ENCODE measurements at regions of chr9 and their contacts with region 1.

Region 1: GRCh38 chr9:124291801-124292396 is 34.1 kb downstream of the NEK6 start:
- DNase-seq: no peak
- H3K4me3 ChIP-seq: no peak overlapping the region
- CTCF ChIP-seq: peak; percentile 24

Region 2: DNA sequence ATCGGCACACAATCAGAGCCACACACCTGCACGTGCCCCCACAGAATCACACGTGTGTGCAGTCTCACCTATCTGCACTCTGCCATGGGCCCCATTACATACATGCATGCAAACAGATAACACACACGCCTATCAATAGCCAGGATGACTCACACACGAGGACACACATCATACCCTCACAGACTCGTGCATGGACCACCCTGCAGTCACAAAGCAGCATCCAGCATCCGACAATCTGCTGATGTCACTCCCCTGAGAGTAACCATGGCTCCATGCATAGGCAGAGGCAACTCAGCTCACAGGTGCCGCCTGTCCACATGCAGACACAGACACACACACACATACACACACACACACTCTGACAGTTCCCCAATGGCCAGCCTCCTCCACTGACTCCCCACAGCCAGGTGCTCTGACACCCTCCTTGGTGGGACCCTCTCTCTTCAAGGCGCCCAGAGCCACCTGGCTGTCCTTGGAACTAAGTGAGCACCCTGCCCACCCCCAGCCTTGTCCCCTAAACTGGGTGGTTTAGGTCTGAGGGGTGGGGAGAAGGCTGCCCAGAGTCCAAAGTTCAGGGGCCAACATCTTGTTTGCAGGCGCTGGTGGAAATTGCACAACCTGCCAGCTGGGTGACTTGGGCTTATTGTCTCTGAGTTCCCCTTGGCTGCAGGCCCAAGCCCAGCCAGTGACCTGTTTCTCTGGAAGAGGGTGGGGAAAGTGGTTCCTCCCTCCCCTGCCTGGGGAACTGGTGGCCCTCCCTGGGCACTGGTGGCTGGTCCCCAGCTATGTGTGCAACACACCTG is 68.8 kb before region 1 on chr9:
- in situ Hi-C with region 1: loop called (anchors 5 kb)
- DNase-seq: no peak
- H3K4me3 ChIP-seq: no peak overlapping the region
- CTCF ChIP-seq: no peak

Region 3: GRCh38 chr9:124415102-124415851 is 123.4 kb after region 1 on chr9 and contains the start of gene PSMB7:
- in situ Hi-C with region 1: no loop called
- DNase-seq: peak; percentile 93
- H3K4me3 ChIP-seq: peak within 1 kb of the TSS; percentile 98
- CTCF ChIP-seq: peak; percentile 78

Measured in astrocyte of the cerebellum (primary cell).